ENCODE measurements at regions of chr1 and their contacts with region 1.

Region 1: GRCh38 chr1:32335790-32336590 is at the start of gene MARCKSL1:
- DNase-seq: peak; percentile 55
- ATAC-seq: peak; percentile 76
- H3K4me3 ChIP-seq: peak within 1 kb of the TSS; percentile 85
- H3K27ac ChIP-seq: peak within 1 kb of the TSS; percentile 85
- H3K4me1 ChIP-seq: peaks cover 6% of the 10 kb centered on the region
- H3K27me3 ChIP-seq: no peaks in the 10 kb centered on the region
- CTCF ChIP-seq: no peak
- POLR2A ChIP-seq: peak; percentile 99
- RAD21 ChIP-seq: no peak; the same call in 1 of the 2 replicates
- total RNA-seq, gene MARCKSL1: 34.7 and 37.5 TPM in 2 replicates

Region 2: DNA sequence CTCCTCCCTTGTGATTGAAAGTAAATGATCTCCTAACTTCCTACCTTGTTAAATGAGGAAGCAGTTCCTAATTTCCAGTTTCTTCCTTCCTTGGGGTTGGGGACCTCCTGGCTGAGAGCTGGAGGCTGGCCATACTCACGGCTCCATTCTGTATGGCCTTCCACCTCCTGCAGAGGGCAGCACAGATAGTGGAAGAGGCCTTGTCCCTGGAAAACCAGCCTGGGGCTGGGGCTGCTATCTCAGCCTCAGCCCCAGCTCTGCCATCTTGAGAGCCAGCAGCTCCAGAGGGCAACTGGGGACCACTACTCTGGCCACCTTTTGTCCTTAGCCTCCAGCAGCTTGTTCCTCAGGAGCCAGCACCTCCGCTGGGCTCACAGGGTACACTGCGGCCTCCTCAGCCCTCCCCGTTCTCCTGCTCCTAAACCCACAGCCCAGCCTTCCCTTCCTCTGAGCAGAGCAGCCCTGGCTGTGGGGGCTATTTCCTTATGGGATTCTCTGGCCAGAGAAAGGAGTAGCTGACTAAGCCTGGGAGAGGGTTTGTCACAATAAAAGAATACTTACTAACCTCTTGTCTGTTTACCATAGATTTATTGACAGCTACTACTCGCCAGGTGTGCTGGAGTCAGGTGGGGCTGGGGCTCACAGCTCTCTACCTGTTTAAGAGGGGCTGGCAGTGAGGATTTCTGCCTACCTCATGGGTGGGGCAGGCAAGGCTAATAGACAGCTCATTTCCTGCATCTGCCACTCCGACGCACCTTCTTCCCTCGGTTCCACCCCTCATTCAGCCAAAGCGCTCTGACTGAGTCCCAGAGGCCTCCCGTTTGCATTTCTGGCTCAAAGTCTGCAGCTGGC is 120.1 kb before region 1 on chr1:
- CTCF ChIA-PET with region 1: interaction called, 3 read pairs
- POLR2A ChIA-PET with region 1: no interaction called
- dilution Hi-C with region 1: no loop called
- in situ Hi-C with region 1: no loop called
- intact Hi-C with region 1: loop called (anchors 1 kb)
- DNase-seq: peak; percentile 66
- ATAC-seq: peak; percentile 97
- H3K4me3 ChIP-seq: no peak overlapping the region
- H3K27ac ChIP-seq: no peak overlapping the region
- H3K4me1 ChIP-seq: peaks cover 3% of the 10 kb centered on the region; the same call in 1 of the 2 replicates
- H3K27me3 ChIP-seq: no peaks in the 10 kb centered on the region
- CTCF ChIP-seq: peak; percentile 83
- POLR2A ChIP-seq: no peak
- RAD21 ChIP-seq: peak; percentile 91

Region 3: GRCh38 chr1:32240140-32240951 is 95.6 kb before region 1 on chr1:
- CTCF ChIA-PET with region 1: no interaction called
- POLR2A ChIA-PET with region 1: no interaction called
- dilution Hi-C with region 1: no loop called
- in situ Hi-C with region 1: no loop called
- intact Hi-C with region 1: loop called (anchors 5 kb)
- DNase-seq: peak; percentile 39
- ATAC-seq: peak; percentile 57
- H3K4me3 ChIP-seq: peak overlapping the region; percentile 51
- H3K27ac ChIP-seq: peak overlapping the region; percentile 45
- H3K4me1 ChIP-seq: peaks cover 12% of the 10 kb centered on the region
- H3K27me3 ChIP-seq: no peaks in the 10 kb centered on the region
- CTCF ChIP-seq: 0 out of 2 replicates have a peak, but pooled peaks have one; percentile 18
- POLR2A ChIP-seq: 0 out of 2 replicates have a peak, but pooled peaks have one; percentile 14
- RAD21 ChIP-seq: no peak

Region 4: GRCh38 chr1:32351399-32352238 is 15.6 kb after region 1 on chr1:
- CTCF ChIA-PET with region 1: no interaction called
- POLR2A ChIA-PET with region 1: interaction called, 3 read pairs
- dilution Hi-C with region 1: no loop called
- in situ Hi-C with region 1: no loop called
- intact Hi-C with region 1: loop called (anchors 1 kb)
- DNase-seq: peak; percentile 88
- ATAC-seq: peak; percentile 91
- H3K4me3 ChIP-seq: peak overlapping the region; percentile 85
- H3K27ac ChIP-seq: peak overlapping the region; percentile 95
- H3K4me1 ChIP-seq: peaks cover 26% of the 10 kb centered on the region
- H3K27me3 ChIP-seq: no peaks in the 10 kb centered on the region
- CTCF ChIP-seq: no peak
- POLR2A ChIP-seq: peak; percentile 85
- RAD21 ChIP-seq: 0 out of 2 replicates have a peak, but pooled peaks have one; percentile 12

Region 5: GRCh38 chr1:32394141-32394889 is 58.3 kb after region 1 on chr1 and contains the start of gene BSDC1:
- CTCF ChIA-PET with region 1: no interaction called
- POLR2A ChIA-PET with region 1: interaction called, 3 read pairs
- dilution Hi-C with region 1: no loop called
- in situ Hi-C with region 1: no loop called
- intact Hi-C with region 1: loop called (anchors 5 kb)
- DNase-seq: peak; percentile 98
- ATAC-seq: peak; percentile 98
- H3K4me3 ChIP-seq: peak within 1 kb of the TSS; percentile 73
- H3K27ac ChIP-seq: peak within 1 kb of the TSS; percentile 83
- H3K4me1 ChIP-seq: peaks cover 4% of the 10 kb centered on the region
- H3K27me3 ChIP-seq: no peaks in the 10 kb centered on the region
- CTCF ChIP-seq: no peak
- POLR2A ChIP-seq: peak; percentile 91
- RAD21 ChIP-seq: no peak
- total RNA-seq, gene BSDC1: 50.8 and 60.4 TPM in 2 replicates

Measured in IMR-90 (cell line).